K562 (cell line): ENCODE measurements at regions of chr18 and their contacts with region 1.

Region 1: GRCh38 chr18:74353169-74353775 is 37.6 kb downstream of the C18orf63 start:
- DNase-seq: peak in 3 of 4 experiments; percentile 4 to 52 (median 12)
- ATAC-seq: peak; percentile 85
- H3K4me3 ChIP-seq: no peak overlapping the region
- H3K27ac ChIP-seq: no peak overlapping the region
- H3K4me1 ChIP-seq: no peaks in the 10 kb centered on the region
- H3K27me3 ChIP-seq: no peaks in the 10 kb centered on the region; a peak in 1 of 5 replicates
- CTCF ChIP-seq: peak; percentile 54 to 64 (median 63)
- EP300 ChIP-seq: no peak
- POLR2A ChIP-seq: no peak
- RAD21 ChIP-seq: peak; percentile 67 to 84

Region 2: GRCh38 chr18:74476140-74476539 is 122.9 kb after region 1 on chr18:
- CTCF ChIA-PET with region 1: no interaction called
- POLR2A ChIA-PET with region 1: no interaction called
- in situ Hi-C with region 1: no loop called
- intact Hi-C with region 1: loop called (anchors 5 kb)
- DNase-seq: peak; percentile 38 to 52 (median 50)
- ATAC-seq: peak; percentile 76
- H3K4me3 ChIP-seq: no peak overlapping the region
- H3K27ac ChIP-seq: no peak overlapping the region
- H3K4me1 ChIP-seq: peaks cover 8 to 17% of the 10 kb centered on the region in 2 experiments; a peak in 4 of 5 replicates
- H3K27me3 ChIP-seq: no peaks in the 10 kb centered on the region
- CTCF ChIP-seq: peak; percentile 55 to 64 (median 61)
- EP300 ChIP-seq: no peak
- POLR2A ChIP-seq: no peak
- RAD21 ChIP-seq: peak in 1 of 2 experiments; percentile 43; a peak in 2 of 4 replicates

Region 3: DNA sequence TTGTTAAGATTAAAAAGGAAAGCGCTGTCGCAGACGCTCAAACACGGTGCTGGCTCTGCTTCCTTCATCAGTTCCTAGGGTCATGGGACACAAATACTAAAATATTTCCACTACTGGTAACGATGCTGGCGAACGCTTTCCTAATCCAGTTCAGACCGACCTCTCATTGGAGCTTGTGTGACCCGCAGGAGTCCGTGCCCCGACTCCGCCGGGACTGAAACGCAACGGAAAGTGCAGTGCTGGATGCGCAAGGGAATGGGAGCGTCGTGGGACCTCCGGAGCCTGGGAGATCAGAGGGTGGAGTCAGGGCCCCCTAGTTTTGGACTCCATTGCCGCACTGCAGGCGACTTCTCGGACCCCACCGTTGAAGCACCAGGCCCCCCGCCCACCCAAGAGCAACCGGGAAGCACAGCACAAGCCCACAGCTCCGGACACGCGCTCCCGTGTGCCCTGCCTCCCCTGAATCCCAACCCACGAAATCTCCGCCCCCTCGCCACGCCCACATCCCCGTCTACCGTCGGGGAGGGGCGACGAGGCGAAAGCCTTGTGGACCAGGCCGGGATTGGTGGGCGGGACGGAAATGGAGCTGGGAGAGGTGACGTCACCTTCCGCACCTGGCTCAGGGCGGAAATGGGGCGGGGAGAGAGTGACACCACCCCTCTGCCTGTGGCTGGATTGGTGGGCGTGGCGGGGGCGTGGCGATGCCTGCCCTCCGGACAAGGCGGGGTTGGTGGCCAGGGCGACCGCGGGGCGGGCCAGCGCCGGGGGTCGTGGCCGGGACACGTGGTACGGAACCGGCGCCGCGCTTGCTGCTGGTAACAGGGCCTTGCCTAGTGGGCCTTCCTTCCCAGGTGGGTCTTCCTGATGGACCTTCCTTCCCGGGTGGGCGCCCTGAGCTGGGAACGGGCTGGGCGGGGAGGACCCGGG is 142.6 kb after region 1 on chr18 and contains the start of gene CNDP2:
- CTCF ChIA-PET with region 1: interaction called, 3 read pairs
- POLR2A ChIA-PET with region 1: no interaction called
- in situ Hi-C with region 1: no loop called
- intact Hi-C with region 1: loop called (anchors 1 kb)
- DNase-seq: peak; percentile 90 to 97 (median 94)
- ATAC-seq: peak; percentile 91
- H3K4me3 ChIP-seq: peak within 1 kb of the TSS; percentile 80
- H3K27ac ChIP-seq: peak within 1 kb of the TSS; percentile 93
- H3K4me1 ChIP-seq: peaks cover 13 to 19% of the 10 kb centered on the region in 2 experiments; a peak in 4 of 5 replicates
- H3K27me3 ChIP-seq: no peaks in the 10 kb centered on the region
- CTCF ChIP-seq: no peak
- EP300 ChIP-seq: no peak
- POLR2A ChIP-seq: peak; percentile 84
- RAD21 ChIP-seq: no peak
- polyA plus RNA-seq, gene CNDP2: 34.1 to 53.8 TPM

Region 4: GRCh38 chr18:76349067-76349715 is 1995.9 kb after region 1 on chr18:
- CTCF ChIA-PET with region 1: no interaction called
- POLR2A ChIA-PET with region 1: no interaction called
- in situ Hi-C with region 1: loop called (anchors 25 kb)
- intact Hi-C with region 1: no loop called
- DNase-seq: peak; percentile 38 to 68 (median 48)
- ATAC-seq: peak; percentile 75
- H3K4me3 ChIP-seq: no peak overlapping the region
- H3K27ac ChIP-seq: no peak overlapping the region
- H3K4me1 ChIP-seq: no peaks in the 10 kb centered on the region
- H3K27me3 ChIP-seq: peaks cover 4 to 36% of the 10 kb centered on the region in 2 experiments; a peak in 3 of 5 replicates
- CTCF ChIP-seq: peak; percentile 61 to 79 (median 72)
- EP300 ChIP-seq: no peak
- POLR2A ChIP-seq: no peak
- RAD21 ChIP-seq: peak; percentile 39 to 66; a peak in 3 of 4 replicates